Naive thymus-derived CD4-positive, alpha-beta T cell (primary cell): ENCODE measurements at regions of chr17 and their contacts with region 1.

Region 1: GRCh38 chr17:2711601-2712299 is at the start of gene CLUH:
- DNase-seq: peak; percentile 92 to 99 (median 96)
- ATAC-seq: peak; percentile 98
- H3K4me3 ChIP-seq: peak within 1 kb of the TSS; percentile 97
- H3K4me3 Mint-ChIP-seq: peak within 1 kb of the TSS; percentile 78 to 91 (median 87)
- H3K27ac ChIP-seq: peak within 1 kb of the TSS; percentile 70
- H3K27ac Mint-ChIP-seq: peak within 1 kb of the TSS; percentile 41 to 89 (median 75)
- H3K4me1 ChIP-seq: peaks cover 22 to 36% of the 10 kb centered on the region in 2 donors
- H3K4me1 Mint-ChIP-seq: peaks cover 33 to 44% (median 36%) of the 10 kb centered on the region in 7 donors
- H3K27me3 ChIP-seq: no peaks in the 10 kb centered on the region
- H3K27me3 Mint-ChIP-seq: no peaks in the 10 kb centered on the region
- total RNA-seq, gene CLUH: 34.6 to 71.1 (median 48.8) TPM

Region 2: DNA sequence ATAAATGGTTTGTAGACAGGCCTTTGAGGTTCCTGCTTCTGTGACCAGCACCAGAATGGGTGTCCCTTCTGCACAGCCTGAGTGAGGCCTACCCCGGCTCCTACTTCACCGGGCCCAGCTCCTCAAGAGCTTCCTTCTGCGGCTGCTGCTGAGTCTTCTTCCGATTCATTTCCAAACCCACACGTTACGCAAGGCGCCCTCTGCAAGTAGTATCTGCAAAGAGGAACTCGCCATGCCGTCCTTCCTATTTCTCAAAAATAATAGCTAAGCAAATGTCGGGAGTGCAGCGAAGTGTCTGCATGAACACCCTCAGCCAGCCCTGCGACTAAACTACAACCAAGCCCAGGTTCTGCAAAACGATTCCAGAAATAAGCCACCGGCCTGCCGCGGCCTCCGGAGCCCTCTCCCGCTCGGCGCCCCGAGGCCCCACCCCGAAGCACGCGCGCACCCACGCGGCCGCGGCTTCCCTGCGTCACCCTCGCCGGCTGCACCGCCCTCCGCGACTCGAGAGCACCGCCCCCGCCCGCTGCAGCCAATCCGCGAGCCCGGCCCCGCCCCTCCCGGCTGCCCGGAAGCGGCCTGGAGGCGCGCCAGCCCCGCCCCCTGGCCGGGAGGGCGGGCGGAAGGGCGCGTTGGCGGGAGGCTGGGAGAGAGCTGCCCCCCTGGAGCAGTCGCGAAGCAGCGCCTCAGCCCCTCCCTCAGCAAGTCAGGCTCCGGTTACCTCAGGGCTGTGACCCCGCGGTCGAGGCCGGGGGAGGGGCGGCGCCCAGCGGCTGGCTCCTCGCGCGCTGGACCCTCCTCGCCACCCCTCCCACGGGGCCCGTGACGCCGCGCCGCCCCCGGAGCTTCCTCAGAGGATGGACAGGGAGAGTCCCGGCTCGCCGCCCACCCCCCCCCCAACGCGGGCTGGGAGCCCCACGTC is 319.2 kb before region 1 on chr17:
- CTCF ChIA-PET with region 1: no interaction called
- POLR2A ChIA-PET with region 1: no interaction called
- intact Hi-C with region 1: loop called in 1 of 2 experiments (anchors 2 kb)
- DNase-seq: peak; percentile 94 to 100 (median 98)
- ATAC-seq: peak; percentile 78
- H3K4me3 ChIP-seq: peak overlapping the region; percentile 89
- H3K4me3 Mint-ChIP-seq: peak overlapping the region; percentile 88 to 97 (median 94)
- H3K27ac ChIP-seq: peak overlapping the region; percentile 100
- H3K27ac Mint-ChIP-seq: peak overlapping the region; percentile 90 to 98 (median 96)
- H3K4me1 ChIP-seq: peaks cover 15 to 52% of the 10 kb centered on the region in 2 donors
- H3K4me1 Mint-ChIP-seq: peaks cover 38 to 70% (median 56%) of the 10 kb centered on the region in 7 donors
- H3K27me3 ChIP-seq: no peaks in the 10 kb centered on the region
- H3K27me3 Mint-ChIP-seq: no peaks in the 10 kb centered on the region

Region 3: DNA sequence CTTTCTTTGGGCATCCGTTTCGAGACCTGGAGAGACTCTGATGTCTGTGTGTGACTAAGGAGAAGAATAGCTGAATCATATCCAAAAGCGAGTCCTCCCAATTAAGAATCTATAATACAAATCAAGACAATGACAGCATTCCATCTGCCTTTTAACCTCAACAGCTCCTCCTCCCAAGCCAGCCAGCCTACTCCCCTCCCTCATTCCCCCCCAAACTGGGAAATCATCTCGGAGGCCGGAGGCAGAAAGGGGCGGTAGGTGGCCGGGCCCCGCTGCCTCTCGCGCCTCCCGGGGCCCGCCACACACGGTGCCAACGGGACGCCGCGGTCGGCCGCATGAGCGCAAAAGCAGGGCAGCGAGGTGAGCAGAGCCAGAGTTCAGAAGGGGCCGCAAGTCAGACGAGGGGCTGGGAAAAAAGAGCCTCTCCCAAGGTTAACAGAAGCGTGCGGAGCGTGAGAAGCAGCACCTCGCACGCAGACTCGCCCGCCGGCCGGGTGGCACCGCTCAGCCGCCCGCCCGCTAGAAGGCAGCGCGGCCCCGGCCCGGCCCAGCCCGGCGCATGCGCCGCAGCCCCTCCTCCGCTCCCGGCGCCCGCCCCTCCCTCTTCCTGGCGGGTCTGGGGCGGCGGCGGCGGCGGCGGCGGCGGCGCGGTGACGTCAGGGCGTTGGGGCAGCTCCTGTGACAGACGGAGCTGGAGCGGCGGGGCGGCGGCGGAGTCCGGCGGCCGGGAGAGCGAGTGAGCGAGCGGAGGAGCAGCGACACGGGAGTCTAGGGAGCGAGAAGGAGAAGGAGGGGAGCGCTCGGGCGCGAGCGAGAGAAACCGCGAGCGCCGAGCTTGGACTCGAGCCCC is 118.6 kb before region 1 on chr17 and contains the start of gene PAFAH1B1:
- CTCF ChIA-PET with region 1: no interaction called
- POLR2A ChIA-PET with region 1: no interaction called
- intact Hi-C with region 1: loop called (anchors 1 kb)
- DNase-seq: peak; percentile 94 to 99 (median 97)
- ATAC-seq: peak; percentile 90
- H3K4me3 ChIP-seq: peak within 1 kb of the TSS; percentile 69
- H3K4me3 Mint-ChIP-seq: peak within 1 kb of the TSS; percentile 87 to 97 (median 92)
- H3K27ac ChIP-seq: peak within 1 kb of the TSS; percentile 90
- H3K27ac Mint-ChIP-seq: peak within 1 kb of the TSS; percentile 85 to 96 (median 92)
- H3K4me1 ChIP-seq: peaks cover 23 to 31% of the 10 kb centered on the region in 2 donors
- H3K4me1 Mint-ChIP-seq: peaks cover 20 to 38% (median 28%) of the 10 kb centered on the region in 7 donors
- H3K27me3 ChIP-seq: no peaks in the 10 kb centered on the region
- H3K27me3 Mint-ChIP-seq: peaks cover 0 to 6% (median 0%) of the 10 kb centered on the region in 5 donors
- total RNA-seq, gene PAFAH1B1: 112 to 156 (median 140) TPM

Region 4: GRCh38 chr17:2749784-2750181 is 38.0 kb after region 1 on chr17:
- CTCF ChIA-PET with region 1: no interaction called
- POLR2A ChIA-PET with region 1: no interaction called
- intact Hi-C with region 1: loop called in 1 of 2 experiments (anchors 1 kb)
- DNase-seq: peak; percentile 50 to 87 (median 72)
- ATAC-seq: peak; percentile 99
- H3K4me3 ChIP-seq: no peak overlapping the region
- H3K4me3 Mint-ChIP-seq: peak overlapping the region in 1 of 10 donors; percentile 19
- H3K27ac ChIP-seq: no peak overlapping the region
- H3K27ac Mint-ChIP-seq: no peak overlapping the region
- H3K4me1 ChIP-seq: no peaks in the 10 kb centered on the region
- H3K4me1 Mint-ChIP-seq: peaks cover 0 to 9% (median 0%) of the 10 kb centered on the region in 7 donors
- H3K27me3 ChIP-seq: no peaks in the 10 kb centered on the region
- H3K27me3 Mint-ChIP-seq: peaks cover 49 to 67% (median 58%) of the 10 kb centered on the region in 5 donors

Region 5: DNA sequence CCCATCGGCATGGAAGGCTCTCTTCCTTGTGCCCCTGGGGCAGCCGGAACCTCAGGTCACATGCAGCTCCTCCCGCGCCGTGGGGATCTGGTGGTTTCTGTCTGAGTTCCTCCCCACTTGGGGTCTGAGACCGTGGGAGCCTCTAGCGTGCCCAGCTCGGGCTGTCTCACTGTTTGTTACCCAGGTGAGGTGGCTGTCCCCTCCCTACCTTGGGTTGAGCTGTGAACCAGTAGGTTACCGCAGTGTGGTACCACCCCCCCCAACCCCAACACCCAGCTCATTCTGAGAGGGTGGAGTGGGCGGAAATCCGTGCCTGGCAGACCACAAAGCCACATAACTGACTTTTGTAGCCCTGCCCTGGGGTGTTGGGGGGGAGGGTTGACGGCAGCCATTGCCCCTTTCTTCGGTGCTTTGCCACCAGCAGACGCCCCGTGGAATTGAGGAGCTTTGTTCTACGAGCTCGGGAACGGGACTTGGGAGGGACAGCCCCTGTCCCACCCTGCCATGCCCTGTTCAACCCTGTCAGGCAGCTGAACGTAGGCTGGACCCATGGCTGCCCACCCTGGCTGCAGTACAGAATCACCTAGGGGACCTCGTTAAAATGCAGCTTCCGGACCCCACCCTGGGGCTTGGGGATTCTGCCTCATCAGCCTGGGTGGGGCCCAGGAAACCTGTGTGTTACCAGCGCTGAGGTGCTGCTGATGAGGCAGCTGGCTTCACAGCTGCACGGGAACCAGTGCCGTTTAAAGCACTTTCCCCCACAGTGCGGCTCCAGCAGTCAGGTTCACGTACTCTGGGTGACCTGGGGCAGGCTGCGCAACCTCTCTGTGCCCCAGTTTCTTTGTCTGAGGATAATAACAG is 103.0 kb after region 1 on chr17:
- CTCF ChIA-PET with region 1: no interaction called
- POLR2A ChIA-PET with region 1: no interaction called
- intact Hi-C with region 1: loop called in 1 of 2 experiments (anchors 1 kb)
- DNase-seq: peak; percentile 68 to 98 (median 98)
- ATAC-seq: peak; percentile 91
- H3K4me3 ChIP-seq: peak overlapping the region; percentile 66
- H3K4me3 Mint-ChIP-seq: peak overlapping the region; percentile 56 to 84 (median 76)
- H3K27ac ChIP-seq: peak overlapping the region; percentile 52
- H3K27ac Mint-ChIP-seq: peak overlapping the region; percentile 34 to 95 (median 88)
- H3K4me1 ChIP-seq: peaks cover 20 to 21% of the 10 kb centered on the region in 2 donors
- H3K4me1 Mint-ChIP-seq: peaks cover 4 to 41% (median 35%) of the 10 kb centered on the region in 7 donors
- H3K27me3 ChIP-seq: no peaks in the 10 kb centered on the region
- H3K27me3 Mint-ChIP-seq: peaks cover 0 to 34% (median 0%) of the 10 kb centered on the region in 5 donors

Region 6: DNA sequence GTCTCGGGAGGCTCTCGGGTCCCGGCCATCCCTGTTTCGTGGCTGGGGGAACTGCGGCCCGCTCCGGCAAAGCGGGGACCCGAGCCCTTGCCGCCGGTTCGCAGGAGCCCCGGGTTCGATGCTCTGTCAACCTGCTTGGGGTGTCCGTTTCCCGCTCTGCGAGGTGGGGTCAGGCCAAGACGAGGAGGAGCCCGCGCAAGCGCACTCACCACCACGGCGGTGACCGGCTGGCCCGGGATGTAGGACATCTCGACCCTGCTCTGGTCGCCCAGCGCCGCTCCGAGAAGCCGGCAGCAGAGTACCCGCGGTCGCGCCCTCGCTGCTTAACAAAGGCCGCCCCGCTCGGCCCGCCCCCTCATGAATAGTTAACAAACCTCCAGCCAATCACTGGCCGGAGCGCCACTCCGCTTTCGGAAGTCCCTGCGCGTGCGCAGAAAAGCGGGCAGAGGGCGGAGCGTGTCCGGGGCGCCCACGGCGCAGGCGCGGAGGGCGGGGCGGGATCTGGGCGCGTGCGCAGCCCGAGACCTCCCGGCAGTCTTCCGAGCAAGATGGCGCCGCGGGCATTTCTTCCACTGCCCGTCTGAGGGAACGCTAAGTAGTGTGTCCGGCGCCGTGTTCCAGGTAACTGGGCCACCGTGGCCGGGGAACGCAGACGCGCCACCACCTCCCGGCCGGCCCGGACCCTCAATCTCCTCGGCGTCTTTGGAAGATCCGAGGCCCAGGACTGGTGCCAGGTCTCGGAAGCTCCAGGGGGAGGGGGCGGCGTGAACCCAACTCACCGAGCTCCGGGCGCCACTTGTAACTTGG is 956.7 kb after region 1 on chr17 and contains the starts of genes EMC6 and TAX1BP3:
- CTCF ChIA-PET with region 1: no interaction called
- POLR2A ChIA-PET with region 1: no interaction called
- intact Hi-C with region 1: loop called (anchors 1 to 2 kb)
- DNase-seq: peak; percentile 97 to 100 (median 100)
- ATAC-seq: peak; percentile 96
- H3K4me3 ChIP-seq: peak within 1 kb of the TSS; percentile 91
- H3K4me3 Mint-ChIP-seq: peak within 1 kb of the TSS; percentile 82 to 94 (median 91)
- H3K27ac ChIP-seq: peak within 1 kb of the TSS; percentile 76
- H3K27ac Mint-ChIP-seq: peak within 1 kb of the TSS; percentile 63 to 93 (median 85)
- H3K4me1 ChIP-seq: peaks cover 8 to 17% of the 10 kb centered on the region in 2 donors
- H3K4me1 Mint-ChIP-seq: peaks cover 21 to 43% (median 30%) of the 10 kb centered on the region in 7 donors
- H3K27me3 ChIP-seq: no peaks in the 10 kb centered on the region
- H3K27me3 Mint-ChIP-seq: peaks cover 0 to 2% (median 0%) of the 10 kb centered on the region in 5 donors
- total RNA-seq, gene EMC6: 23.1 to 39.0 (median 31.2) TPM
- total RNA-seq, gene TAX1BP3: 10.5 to 28.4 (median 11.7) TPM